ENCODE measurements at regions of chr12 and their contacts with region 1.

Region 1: DNA sequence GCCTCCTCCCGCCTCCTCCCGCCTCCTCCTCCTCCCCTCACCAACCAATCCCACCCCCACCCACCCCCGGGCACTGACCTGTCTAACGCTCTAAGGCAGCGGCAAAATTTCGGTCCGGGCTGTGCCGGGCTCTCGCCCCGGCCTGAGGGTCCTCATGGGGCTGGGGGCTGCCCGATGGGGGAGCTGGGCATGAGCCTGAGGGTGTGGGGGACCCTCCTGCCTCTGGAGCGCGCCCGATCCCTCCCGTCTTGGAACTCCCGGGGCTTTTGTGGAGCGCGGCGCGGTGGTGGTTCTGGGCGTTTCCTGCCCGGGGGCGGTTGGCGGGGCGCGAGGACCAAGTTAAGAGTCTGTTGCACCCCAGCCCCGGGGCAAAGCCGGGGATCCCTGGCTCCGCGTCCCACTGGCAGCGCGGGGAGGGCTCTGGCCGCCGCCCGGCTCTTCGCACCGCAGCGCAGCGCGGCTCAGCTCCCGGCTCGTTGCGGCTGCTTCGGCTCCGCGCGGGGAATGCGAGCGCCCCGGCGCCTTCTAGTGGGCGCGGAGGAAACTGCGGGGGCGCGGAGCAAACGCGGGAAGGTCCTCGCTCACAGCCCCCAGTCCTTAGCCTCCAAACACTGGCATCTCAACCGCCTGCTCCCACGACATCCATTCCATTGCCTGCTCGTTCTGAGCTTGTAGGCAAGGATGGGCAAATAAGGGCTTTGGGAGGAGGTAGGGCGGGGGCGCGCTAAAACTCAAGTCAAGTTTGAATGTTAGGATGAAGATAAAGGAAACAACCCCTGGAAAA is at the start of gene B4GALNT1:
- DNase-seq: peak; percentile 84
- H3K4me3 Mint-ChIP-seq: peak within 1 kb of the TSS; percentile 84
- H3K27ac Mint-ChIP-seq: peak within 1 kb of the TSS; percentile 14
- H3K4me1 Mint-ChIP-seq: peaks cover 20% of the 10 kb centered on the region
- H3K27me3 Mint-ChIP-seq: no peaks in the 10 kb centered on the region
- CTCF ChIP-seq: peak; percentile 92
- total RNA-seq, gene B4GALNT1: 8.1 and 11.1 TPM in 2 replicates

Region 2: DNA sequence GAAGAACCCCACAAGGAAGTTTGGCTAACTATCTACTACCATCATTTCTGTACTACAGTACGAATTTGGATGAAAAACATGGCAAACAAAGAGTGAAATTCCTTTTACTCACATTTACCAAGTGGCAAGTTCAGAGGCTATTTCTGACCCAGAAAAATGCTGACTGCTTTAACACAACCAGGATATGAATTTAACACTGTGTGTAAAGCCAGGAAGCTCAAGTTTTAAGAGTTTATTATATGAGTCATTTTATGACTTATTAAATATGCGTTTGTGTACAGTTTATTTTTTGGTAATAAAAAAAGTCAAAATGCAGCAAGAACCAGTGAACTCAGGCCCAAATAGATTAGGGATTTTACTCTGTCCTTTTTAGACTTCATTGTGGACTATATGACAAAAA is 323.5 kb before region 1 on chr12:
- CTCF ChIA-PET with region 1: no interaction called
- intact Hi-C with region 1: no loop called
- DNase-seq: no peak
- H3K4me3 Mint-ChIP-seq: no peak overlapping the region
- H3K27ac Mint-ChIP-seq: no peak overlapping the region
- H3K4me1 Mint-ChIP-seq: no peaks in the 10 kb centered on the region
- H3K27me3 Mint-ChIP-seq: no peaks in the 10 kb centered on the region
- CTCF ChIP-seq: no peak

Region 3: GRCh38 chr12:57687862-57688261 is 55.0 kb after region 1 on chr12:
- CTCF ChIA-PET with region 1: no interaction called
- intact Hi-C with region 1: loop called (anchors 10 kb)
- DNase-seq: no peak
- H3K4me3 Mint-ChIP-seq: no peak overlapping the region
- H3K27ac Mint-ChIP-seq: no peak overlapping the region
- H3K4me1 Mint-ChIP-seq: no peaks in the 10 kb centered on the region
- H3K27me3 Mint-ChIP-seq: peaks cover 82% of the 10 kb centered on the region
- CTCF ChIP-seq: no peak

Measured in Calu3 (cell line).